Psoas muscle (tissue), 8 donors: ENCODE measurements at regions of chr6 and their contacts with region 1.

Region 1: DNA sequence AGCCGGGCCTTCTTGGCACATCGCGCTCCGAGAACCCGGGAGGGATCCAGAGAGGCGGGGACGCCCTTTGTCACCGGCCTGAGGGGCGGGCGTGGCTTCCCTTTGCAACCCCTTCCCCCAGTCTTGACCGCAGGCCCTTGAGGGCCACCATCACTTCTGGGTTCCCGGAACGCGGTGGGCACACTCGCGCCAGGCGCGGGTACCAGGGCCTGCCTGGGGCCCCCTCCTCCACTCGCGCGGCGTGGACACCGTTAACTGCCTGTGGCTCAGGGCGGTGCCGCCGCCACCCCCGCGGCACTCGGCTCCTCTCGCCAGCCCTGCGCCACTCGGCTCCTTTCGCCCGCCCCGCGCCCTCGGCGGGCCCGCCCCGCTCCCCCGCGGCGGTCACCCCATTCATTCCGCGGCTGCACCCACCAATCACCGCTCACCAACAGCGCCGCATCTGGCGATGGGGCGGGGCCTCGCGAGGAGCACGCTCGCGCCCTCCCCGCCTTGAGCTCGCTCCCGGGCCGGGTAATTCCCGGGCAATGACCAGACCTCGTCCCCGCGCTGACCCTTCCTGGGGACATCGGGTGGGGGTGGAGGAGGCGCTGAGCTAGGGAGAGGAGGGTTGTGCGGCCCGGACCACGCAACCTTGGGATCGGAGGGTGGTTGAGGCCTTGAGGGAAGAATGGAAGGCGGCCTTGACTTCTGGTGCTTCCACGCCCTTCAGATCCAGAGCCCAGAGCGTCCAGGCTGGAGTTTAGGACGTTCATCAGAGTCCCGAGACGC is 10.5 kb upstream of the ELOVL5 start:
- DNase-seq: peak; percentile 95 to 96
- ATAC-seq: peak; percentile 98 to 99 (median 99)
- H3K4me3 ChIP-seq: peak overlapping the region; percentile 81
- H3K27ac ChIP-seq: peak overlapping the region; percentile 73
- H3K4me1 ChIP-seq: peaks cover 8% of the 10 kb centered on the region
- H3K27me3 ChIP-seq: no peaks in the 10 kb centered on the region
- CTCF ChIP-seq: no peak

Region 2: DNA sequence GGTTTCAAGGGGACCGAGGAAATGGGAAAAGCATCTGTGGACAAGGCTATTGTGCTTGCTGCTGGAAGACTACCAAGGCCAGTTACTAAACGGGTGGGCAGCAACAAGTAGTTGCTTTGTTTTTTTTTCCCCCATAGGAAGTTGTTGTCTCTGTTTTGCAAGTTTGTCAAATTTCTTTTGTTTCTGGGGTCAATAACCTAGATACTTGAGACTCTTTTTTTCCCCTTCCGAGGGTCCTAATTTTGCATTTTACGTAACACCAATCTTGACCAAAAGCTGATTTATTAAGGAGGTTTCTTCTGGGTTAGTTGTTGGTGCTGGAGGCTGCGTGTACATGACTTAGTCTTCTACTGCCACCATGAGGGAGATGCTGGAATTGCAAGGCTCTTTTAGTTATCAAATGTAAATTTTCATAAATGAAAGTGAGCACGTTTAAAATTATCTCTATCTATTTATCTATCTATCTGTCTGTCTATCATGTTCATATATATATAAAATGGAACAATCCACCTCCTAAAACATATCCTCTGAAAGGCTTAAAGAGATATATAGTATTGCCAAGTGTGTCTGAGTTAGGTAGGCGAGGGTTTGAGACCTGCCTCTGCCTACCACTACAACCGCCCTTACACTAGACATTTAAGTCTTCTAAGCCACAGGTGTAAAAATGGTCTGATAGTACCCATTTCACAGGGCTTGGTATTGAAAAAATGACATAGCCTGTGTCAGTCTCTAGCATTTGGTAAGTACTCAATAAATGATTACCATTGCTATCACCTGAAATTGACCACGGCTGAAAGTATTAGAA is 125.4 kb after region 1 on chr6:
- intact Hi-C with region 1: loop called in 1 of 2 experiments (anchors 5 kb)
- DNase-seq: no peak
- ATAC-seq: peak; percentile 54 to 87 (median 70)
- H3K4me3 ChIP-seq: peak overlapping the region; percentile 44
- H3K27ac ChIP-seq: no peak overlapping the region
- H3K4me1 ChIP-seq: peaks cover 7% of the 10 kb centered on the region
- H3K27me3 ChIP-seq: no peaks in the 10 kb centered on the region
- CTCF ChIP-seq: peak; percentile 96